Breast epithelium (tissue), 4 donors: ENCODE measurements at regions of chr11 and their contacts with region 1.

Region 1: GRCh38 chr11:27485930-27486773 is 13.6 kb upstream of the LGR4 start:
- DNase-seq: no peak
- H3K4me3 ChIP-seq: no peak overlapping the region
- H3K27ac ChIP-seq: no peak overlapping the region
- H3K4me1 ChIP-seq: no peaks in the 10 kb centered on the region
- H3K27me3 ChIP-seq: no peaks in the 10 kb centered on the region
- CTCF ChIP-seq: peak; percentile 85 to 97 (median 96)
- POLR2A ChIP-seq: no peak

Region 2: DNA sequence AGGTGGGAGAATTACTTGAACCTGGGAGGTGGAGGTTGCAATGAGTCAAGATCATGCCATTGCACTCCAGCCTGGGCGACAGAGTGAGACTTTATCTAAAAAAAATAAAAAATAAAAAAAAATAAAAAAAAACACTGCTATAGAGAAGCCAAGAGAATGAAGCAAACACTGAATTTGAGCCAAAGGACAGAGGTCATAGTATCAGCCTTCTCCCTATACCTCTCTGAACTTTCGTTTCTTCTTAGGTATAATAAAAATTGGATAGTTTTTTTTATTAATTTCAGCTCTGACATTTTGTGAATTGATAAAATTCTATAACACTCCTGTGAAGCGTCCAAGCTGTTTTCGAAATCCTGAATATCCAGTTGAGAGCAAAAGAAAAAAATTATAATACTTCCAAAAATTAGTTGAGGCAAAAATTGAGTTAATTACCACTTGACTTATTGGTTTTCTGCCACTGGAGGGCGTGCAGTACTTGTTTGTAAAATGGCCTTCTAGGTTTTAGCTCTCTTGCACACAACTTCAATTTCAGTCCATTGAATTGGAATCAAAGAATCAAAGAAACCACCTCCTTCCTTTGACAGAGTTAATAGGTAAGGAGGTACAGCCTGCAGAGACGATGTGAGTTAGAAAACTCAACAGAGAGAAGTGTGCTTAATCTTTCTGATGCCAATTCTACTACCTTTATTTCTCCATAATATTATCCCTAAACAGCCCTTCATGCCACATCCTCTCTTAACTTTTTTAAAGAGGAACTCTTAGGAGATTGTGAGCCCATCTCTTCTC is 302.3 kb before region 1 on chr11:
- intact Hi-C with region 1: loop called (anchors 5 kb)
- DNase-seq: peak in 1 of 2 donors; percentile 23
- H3K4me3 ChIP-seq: no peak overlapping the region
- H3K27ac ChIP-seq: no peak overlapping the region
- H3K4me1 ChIP-seq: no peaks in the 10 kb centered on the region
- H3K27me3 ChIP-seq: no peaks in the 10 kb centered on the region
- CTCF ChIP-seq: peak; percentile 62 to 79 (median 72)
- POLR2A ChIP-seq: no peak